Heart left ventricle (tissue), 16 donors: ENCODE measurements at regions of chr5 and their contacts with region 1.

Region 1: DNA sequence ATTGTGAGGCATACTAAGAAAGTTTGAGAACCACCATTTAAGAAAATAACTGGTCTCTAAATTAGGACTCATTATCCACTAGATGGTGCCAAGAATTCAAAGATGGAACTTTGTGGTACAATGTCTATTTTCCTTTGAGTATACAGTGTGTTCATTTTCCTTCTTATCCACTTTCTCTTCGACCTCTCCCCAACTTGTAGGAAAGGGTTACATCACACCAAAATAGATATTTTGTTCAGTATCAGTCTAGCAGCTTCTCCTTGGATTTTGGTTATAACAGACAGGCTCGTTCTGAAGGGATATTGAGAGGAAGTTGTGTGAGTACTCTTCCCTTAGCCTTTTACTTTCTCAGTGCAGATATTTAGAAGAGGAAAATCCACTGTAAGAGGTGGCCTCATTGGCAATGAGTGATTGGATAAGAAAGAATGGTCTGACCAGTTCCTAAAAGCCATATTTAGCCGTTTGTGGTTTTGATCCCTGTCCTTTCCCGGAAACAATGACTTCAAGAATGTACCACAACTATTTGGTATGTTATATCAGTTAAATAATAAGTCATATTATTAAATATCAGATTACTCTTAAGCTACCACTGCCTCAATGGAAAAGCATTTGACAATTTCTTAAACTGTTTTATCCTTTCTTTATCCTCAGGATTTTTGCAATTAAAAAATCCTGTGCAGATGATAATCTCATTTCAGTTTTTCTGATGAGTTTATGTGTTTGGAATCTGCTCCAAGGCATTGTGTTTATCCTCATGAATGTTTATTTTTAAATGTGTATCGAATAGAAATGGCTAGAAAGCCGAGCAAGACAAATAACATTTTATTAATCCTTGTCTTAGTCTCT is 69.0 kb upstream of the GRAMD2B start:
- DNase-seq: no peak
- ATAC-seq: peak; percentile 51 to 89 (median 78)
- H3K4me3 ChIP-seq: peak overlapping the region in 7 of 12 donors; percentile 14 to 39 (median 32)
- H3K27ac ChIP-seq: peak overlapping the region in 6 of 12 donors; percentile 25 to 63 (median 50)
- H3K4me1 ChIP-seq: peaks cover 0 to 8% (median 0%) of the 10 kb centered on the region in 12 donors
- H3K27me3 ChIP-seq: no peaks in the 10 kb centered on the region
- CTCF ChIP-seq: peak; percentile 26 to 82 (median 66)
- POLR2A ChIP-seq: no peak

Region 2: DNA sequence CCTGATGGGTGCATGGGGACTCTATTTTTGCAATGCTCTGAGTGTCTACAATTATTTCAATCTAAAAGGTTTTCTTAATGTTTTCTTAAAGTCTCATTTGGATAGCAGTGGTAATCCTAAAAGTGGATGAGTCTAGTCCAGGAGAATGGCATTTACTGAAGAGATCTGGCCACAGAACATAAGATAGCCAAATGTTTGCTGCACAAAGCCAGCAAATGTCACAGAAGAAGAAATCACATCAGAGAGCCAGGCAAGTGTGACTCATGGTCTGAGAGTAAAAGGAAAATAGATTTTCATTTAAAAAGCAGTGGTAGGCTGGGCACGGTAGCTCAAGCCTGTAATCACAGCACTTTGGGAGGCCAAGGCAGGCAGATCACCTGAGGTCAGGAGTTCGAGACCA is 283.8 kb before region 1 on chr5:
- intact Hi-C with region 1: no loop called
- DNase-seq: no peak
- ATAC-seq: no peak
- H3K4me3 ChIP-seq: no peak overlapping the region
- H3K27ac ChIP-seq: no peak overlapping the region
- H3K4me1 ChIP-seq: no peaks in the 10 kb centered on the region
- H3K27me3 ChIP-seq: no peaks in the 10 kb centered on the region
- CTCF ChIP-seq: no peak
- POLR2A ChIP-seq: no peak

Region 3: GRCh38 chr5:126483156-126483555 is 128.9 kb after region 1 on chr5:
- intact Hi-C with region 1: loop called in 1 of 10 experiments (anchors 5 kb)
- DNase-seq: no peak
- ATAC-seq: no peak
- H3K4me3 ChIP-seq: no peak overlapping the region
- H3K27ac ChIP-seq: peak overlapping the region in 1 of 12 donors; percentile 38
- H3K4me1 ChIP-seq: peaks cover 0 to 30% (median 7%) of the 10 kb centered on the region in 12 donors
- H3K27me3 ChIP-seq: no peaks in the 10 kb centered on the region
- CTCF ChIP-seq: no peak
- POLR2A ChIP-seq: no peak

Region 4: GRCh38 chr5:126536874-126537273 is 182.6 kb after region 1 on chr5:
- intact Hi-C with region 1: loop called (anchors 1 to 2 kb)
- DNase-seq: no peak
- ATAC-seq: no peak
- H3K4me3 ChIP-seq: no peak overlapping the region
- H3K27ac ChIP-seq: peak overlapping the region in 1 of 12 donors; percentile 22
- H3K4me1 ChIP-seq: peaks cover 0 to 16% (median 5%) of the 10 kb centered on the region in 12 donors
- H3K27me3 ChIP-seq: no peaks in the 10 kb centered on the region
- CTCF ChIP-seq: no peak
- POLR2A ChIP-seq: no peak

Region 5: DNA sequence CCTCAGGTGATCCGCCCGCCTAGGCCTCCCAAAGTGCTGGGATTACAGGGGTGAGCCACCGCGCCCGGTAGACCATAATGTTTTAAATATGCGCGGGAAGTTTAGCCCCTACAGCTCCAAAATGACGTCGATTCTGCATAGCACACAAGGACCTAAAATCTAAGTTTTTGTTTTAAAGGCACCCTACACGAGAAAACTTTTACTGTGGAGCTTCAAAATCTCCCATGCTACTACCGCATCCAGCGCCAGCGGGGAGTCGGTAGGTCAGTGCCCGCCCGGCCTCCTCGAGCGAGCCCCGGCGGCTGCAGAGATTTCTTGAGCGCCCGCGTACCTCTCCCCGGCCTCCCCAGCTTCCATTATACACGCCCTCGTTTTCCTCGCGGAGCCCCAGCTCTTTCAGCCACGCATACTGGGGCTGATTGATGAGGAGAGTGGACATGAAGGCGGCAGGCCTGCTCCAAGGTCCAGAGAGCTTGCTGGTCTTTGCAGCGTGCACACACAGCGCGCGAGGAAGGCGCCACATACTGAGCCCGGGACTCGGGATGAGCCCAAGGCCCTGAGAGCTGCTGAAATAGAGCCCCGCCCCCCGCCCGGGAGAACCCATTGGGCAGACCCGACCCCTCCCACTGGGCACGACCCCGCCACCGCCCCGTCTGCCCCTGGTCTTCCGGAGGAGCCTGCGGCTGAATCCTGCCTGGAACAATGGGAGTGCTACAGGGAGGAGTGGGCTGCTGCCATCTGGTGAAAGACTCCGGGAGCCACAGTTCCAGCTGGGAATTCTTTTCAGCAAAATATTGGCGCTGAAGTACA is 240.6 kb after region 1 on chr5 and contains the start of gene ALDH7A1:
- intact Hi-C with region 1: loop called in 5 of 10 experiments (anchors 2 to 5 kb)
- DNase-seq: peak; percentile 93 to 96 (median 95)
- ATAC-seq: peak; percentile 96 to 97 (median 96)
- H3K4me3 ChIP-seq: peak within 1 kb of the TSS; percentile 33 to 83 (median 72)
- H3K27ac ChIP-seq: peak within 1 kb of the TSS in 11 of 12 donors; percentile 62 to 93 (median 77)
- H3K4me1 ChIP-seq: peaks cover 0 to 23% (median 12%) of the 10 kb centered on the region in 12 donors
- H3K27me3 ChIP-seq: no peaks in the 10 kb centered on the region
- CTCF ChIP-seq: peak; percentile 20 to 70 (median 38)
- POLR2A ChIP-seq: peak in 1 of 2 donors; percentile 68
- total RNA-seq, gene ALDH7A1: 12.3 to 67.6 (median 45.0) TPM

Region 6: GRCh38 chr5:126718246-126718868 is 364.1 kb after region 1 on chr5:
- intact Hi-C with region 1: no loop called
- DNase-seq: no peak
- ATAC-seq: no peak
- H3K4me3 ChIP-seq: no peak overlapping the region
- H3K27ac ChIP-seq: no peak overlapping the region
- H3K4me1 ChIP-seq: peaks cover 0 to 3% (median 0%) of the 10 kb centered on the region in 12 donors
- H3K27me3 ChIP-seq: peaks cover 0 to 3% (median 0%) of the 10 kb centered on the region in 9 donors
- CTCF ChIP-seq: no peak
- POLR2A ChIP-seq: no peak

Region 7: DNA sequence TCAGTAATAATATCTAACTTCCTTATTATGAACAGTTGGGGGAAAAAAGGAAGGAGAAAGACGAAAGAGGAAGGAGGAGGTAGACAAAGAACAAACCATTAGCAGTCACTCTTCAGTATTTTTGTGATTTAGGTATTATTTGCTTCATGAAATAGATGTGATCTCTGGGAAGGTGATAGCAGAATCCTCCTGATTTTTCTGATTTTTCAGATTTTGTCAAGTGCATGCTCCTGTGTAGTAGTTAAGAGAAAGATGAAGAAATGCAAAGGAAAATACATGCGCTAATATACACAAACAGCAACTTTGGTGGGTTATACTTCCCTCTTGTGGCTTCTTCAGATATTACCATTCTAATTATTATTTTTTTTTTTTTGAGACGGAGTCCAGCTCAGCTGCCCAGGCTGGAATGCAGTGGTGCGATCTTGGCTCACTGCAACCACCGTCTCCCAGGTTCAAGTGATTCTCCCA is 454.3 kb after region 1 on chr5:
- intact Hi-C with region 1: loop called in 1 of 10 experiments (anchors 10 kb)
- DNase-seq: no peak
- ATAC-seq: peak in 3 of 4 donors; percentile 33 to 61 (median 39)
- H3K4me3 ChIP-seq: peak overlapping the region in 1 of 12 donors; percentile 30
- H3K27ac ChIP-seq: peak overlapping the region in 1 of 12 donors; percentile 90
- H3K4me1 ChIP-seq: peaks cover 0 to 64% (median 0%) of the 10 kb centered on the region in 12 donors
- H3K27me3 ChIP-seq: no peaks in the 10 kb centered on the region
- CTCF ChIP-seq: peak; percentile 30 to 63 (median 48)
- POLR2A ChIP-seq: no peak